Activated naive CD8-positive, alpha-beta T cell treated with anti-CD3 and anti-CD28 coated beads, Interleukin-2, amount 10 ng/mL, durations not matched to agents 7 days and 5 days (primary cell): ENCODE measurements at regions of chr18 and their contacts with region 1.

Region 1: DNA sequence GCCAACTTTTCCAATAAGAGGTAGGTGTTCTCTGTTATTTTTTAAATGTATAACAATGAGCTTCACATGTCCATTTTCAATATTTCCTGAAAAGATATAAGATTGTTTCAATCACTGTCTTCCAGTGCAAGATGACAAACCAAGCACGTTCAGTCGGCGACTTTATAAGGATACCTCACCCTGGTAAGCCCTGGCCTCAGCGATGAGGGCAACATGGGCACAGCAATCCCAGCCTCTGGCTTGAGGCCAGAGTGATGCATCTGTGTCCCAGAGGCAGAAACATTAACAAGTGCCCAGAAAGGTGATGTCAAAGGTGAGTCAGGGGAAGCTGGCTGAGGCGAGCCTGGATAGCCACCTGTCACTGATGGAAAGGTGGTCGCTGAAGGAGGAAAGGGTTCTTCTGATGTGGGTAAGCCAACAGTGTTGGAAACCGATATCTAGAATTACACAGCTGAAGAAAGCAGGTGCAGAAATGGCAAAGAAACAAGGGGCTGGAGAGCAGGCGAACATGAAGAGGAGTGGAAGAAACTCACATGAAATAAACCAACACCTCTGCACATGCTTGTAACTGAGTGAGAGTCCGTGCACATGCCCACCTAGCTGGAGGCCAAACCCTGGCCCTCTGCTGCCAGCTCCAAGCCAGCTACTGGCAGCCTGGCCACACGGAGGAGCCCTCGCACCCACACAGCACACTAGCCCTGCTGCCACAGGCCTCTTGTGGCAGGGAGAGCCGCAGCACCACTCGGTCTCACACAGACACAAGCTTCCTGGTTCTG is 65.5 kb downstream of the FBXO15 start:
- DNase-seq: peak; percentile 77
- ATAC-seq: peak; percentile 99
- H3K4me3 Mint-ChIP-seq: peak overlapping the region; percentile 89
- H3K27ac Mint-ChIP-seq: peak overlapping the region; percentile 96
- H3K4me1 Mint-ChIP-seq: peaks cover 17% of the 10 kb centered on the region
- H3K27me3 Mint-ChIP-seq: peaks cover 2% of the 10 kb centered on the region

Region 2: GRCh38 chr18:74064510-74064909 is 17.6 kb before region 1 on chr18:
- POLR2A ChIA-PET with region 1: interaction called, 14 read pairs
- DNase-seq: peak; percentile 50
- ATAC-seq: peak; percentile 81
- H3K4me3 Mint-ChIP-seq: peak overlapping the region; percentile 76
- H3K27ac Mint-ChIP-seq: peak overlapping the region; percentile 74
- H3K4me1 Mint-ChIP-seq: peaks cover 35% of the 10 kb centered on the region
- H3K27me3 Mint-ChIP-seq: no peaks in the 10 kb centered on the region

Region 3: DNA sequence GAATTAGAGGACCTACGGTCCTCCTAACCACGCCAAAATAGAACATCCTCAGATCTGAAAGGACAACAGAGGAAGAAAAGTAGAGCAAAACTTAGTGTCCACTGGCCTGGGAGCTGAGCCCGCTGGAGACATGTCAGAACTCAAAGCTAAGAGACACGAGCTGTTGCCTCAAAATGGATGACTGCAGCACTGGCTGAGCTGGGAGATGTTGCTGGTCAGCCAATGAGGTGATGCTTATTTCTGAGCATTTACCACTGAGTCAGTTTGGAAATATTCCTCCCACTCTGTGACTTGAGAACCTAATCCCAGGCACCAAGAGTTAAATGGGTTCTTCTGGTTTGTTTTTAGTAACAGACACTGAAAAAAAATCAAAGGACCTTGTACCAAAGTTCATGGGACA is 32.9 kb after region 1 on chr18:
- POLR2A ChIA-PET with region 1: interaction called, 18 read pairs
- DNase-seq: no peak
- ATAC-seq: no peak
- H3K4me3 Mint-ChIP-seq: no peak overlapping the region
- H3K27ac Mint-ChIP-seq: no peak overlapping the region
- H3K4me1 Mint-ChIP-seq: peaks cover 12% of the 10 kb centered on the region
- H3K27me3 Mint-ChIP-seq: no peaks in the 10 kb centered on the region